ENCODE measurements at regions of chr1 and their contacts with region 1.

Region 1: GRCh38 chr1:204989266-204990058 is 53.5 kb upstream of the CNTN2 start:
- DNase-seq: peak; percentile 70 to 90
- H3K4me3 ChIP-seq: no peak overlapping the region
- H3K27ac ChIP-seq: no peak overlapping the region
- H3K4me1 ChIP-seq: peaks cover 10 to 27% (median 19%) of the 10 kb centered on the region in 4 experiments
- H3K27me3 ChIP-seq: no peaks in the 10 kb centered on the region; a peak in 1 of 7 replicates
- CTCF ChIP-seq: peak; percentile 98 to 100 (median 98)
- EP300 ChIP-seq: no peak
- POLR2A ChIP-seq: no peak
- RAD21 ChIP-seq: peak; percentile 100

Region 2: DNA sequence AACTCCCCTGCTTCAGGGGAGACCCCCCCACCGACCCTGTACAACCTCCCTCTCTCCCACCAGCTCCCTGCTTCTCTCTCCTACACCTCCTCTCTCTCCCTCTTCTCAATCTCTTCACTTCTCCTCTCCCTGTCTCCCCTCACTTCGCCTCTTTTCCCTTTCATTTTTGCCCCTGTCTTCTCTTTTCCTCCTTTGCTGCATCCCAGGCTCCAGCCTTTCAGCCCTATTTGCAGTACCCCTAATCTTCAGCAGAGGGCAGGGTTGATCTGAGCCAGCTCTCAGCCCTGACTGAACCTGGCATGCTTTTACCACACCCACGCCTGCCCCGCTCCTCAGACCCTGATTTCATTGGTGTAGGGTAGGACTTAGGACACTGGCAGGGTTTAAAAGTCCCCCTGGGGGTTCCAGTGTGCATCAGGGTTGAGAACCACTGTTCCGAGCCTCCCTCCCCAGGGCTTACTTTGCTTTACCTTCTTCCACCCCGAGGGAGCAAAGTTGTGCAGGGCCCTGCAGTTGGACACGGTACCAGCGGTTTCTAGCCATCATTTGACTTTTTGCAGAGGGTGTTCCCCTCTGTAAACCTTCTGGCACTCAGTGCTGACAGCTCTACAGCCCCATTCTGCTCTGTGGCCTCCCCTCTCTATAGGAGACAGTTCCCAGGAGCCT is 13.8 kb before region 1 on chr1:
- CTCF ChIA-PET with region 1: interaction called, 99 read pairs
- POLR2A ChIA-PET with region 1: no interaction called
- DNase-seq: peak; percentile 23 to 88
- H3K4me3 ChIP-seq: no peak overlapping the region
- H3K27ac ChIP-seq: no peak overlapping the region
- H3K4me1 ChIP-seq: no peaks in the 10 kb centered on the region
- H3K27me3 ChIP-seq: no peaks in the 10 kb centered on the region
- CTCF ChIP-seq: peak; percentile 77 to 82 (median 80)
- EP300 ChIP-seq: no peak
- POLR2A ChIP-seq: no peak
- RAD21 ChIP-seq: peak; percentile 84 to 86

Region 3: GRCh38 chr1:205003393-205004131 is 14.1 kb after region 1 on chr1:
- CTCF ChIA-PET with region 1: interaction called, 76 read pairs
- POLR2A ChIA-PET with region 1: interaction called, 16 read pairs
- DNase-seq: no peak
- H3K4me3 ChIP-seq: no peak overlapping the region
- H3K27ac ChIP-seq: no peak overlapping the region
- H3K4me1 ChIP-seq: peaks cover 0 to 16% (median 6%) of the 10 kb centered on the region in 4 experiments; a peak in 4 of 7 replicates
- H3K27me3 ChIP-seq: no peaks in the 10 kb centered on the region; a peak in 1 of 7 replicates
- CTCF ChIP-seq: no peak
- EP300 ChIP-seq: no peak
- POLR2A ChIP-seq: no peak
- RAD21 ChIP-seq: no peak

Region 4: GRCh38 chr1:205013683-205014367 is 24.4 kb after region 1 on chr1:
- CTCF ChIA-PET with region 1: interaction called, 531 read pairs
- POLR2A ChIA-PET with region 1: no interaction called
- DNase-seq: no peak
- H3K4me3 ChIP-seq: no peak overlapping the region
- H3K27ac ChIP-seq: no peak overlapping the region
- H3K4me1 ChIP-seq: peaks cover 0 to 21% (median 7%) of the 10 kb centered on the region in 4 experiments; a peak in 5 of 7 replicates
- H3K27me3 ChIP-seq: no peaks in the 10 kb centered on the region
- CTCF ChIP-seq: no peak
- EP300 ChIP-seq: no peak
- POLR2A ChIP-seq: no peak
- RAD21 ChIP-seq: no peak

Region 5: GRCh38 chr1:205042911-205043806 is 53.7 kb after region 1 on chr1 and contains the start of gene CNTN2:
- CTCF ChIA-PET with region 1: interaction called, 1,336 read pairs
- POLR2A ChIA-PET with region 1: interaction called, 3 read pairs
- DNase-seq: peak in 1 of 2 experiments; percentile 75
- H3K4me3 ChIP-seq: peak within 1 kb of the TSS; percentile 1 to 56 (median 34); a peak in 5 of 8 replicates
- H3K27ac ChIP-seq: no peak within 1 kb of the TSS
- H3K4me1 ChIP-seq: peaks cover 13 to 27% (median 16%) of the 10 kb centered on the region in 4 experiments
- H3K27me3 ChIP-seq: peaks cover 0 to 32% (median 18%) of the 10 kb centered on the region in 4 experiments; a peak in 5 of 7 replicates
- CTCF ChIP-seq: no peak
- EP300 ChIP-seq: no peak
- POLR2A ChIP-seq: no peak
- RAD21 ChIP-seq: no peak
- total RNA-seq, gene CNTN2: 3.9 TPM in 2 replicates

Region 6: DNA sequence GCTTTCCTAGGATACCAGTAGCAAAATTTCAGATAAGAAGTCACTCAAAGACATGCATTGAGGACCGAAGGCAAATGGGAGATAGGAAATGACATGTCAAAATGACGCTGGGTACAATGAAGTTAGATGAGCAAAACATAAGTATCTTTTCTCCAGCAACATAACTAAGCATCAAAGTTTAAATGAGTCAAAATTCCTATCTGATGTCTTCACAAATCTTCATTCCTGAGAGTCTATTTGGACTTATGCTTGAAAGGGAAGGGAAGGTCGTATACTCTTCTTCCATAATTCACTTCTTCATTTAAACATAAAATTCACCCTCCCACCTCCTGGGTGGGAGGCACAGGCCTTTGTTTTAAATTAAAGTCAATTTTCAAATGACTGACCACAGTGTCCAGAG is 98.9 kb after region 1 on chr1:
- CTCF ChIA-PET with region 1: interaction called, 1,336 read pairs
- POLR2A ChIA-PET with region 1: no interaction called
- DNase-seq: no peak
- H3K4me3 ChIP-seq: no peak overlapping the region
- H3K27ac ChIP-seq: no peak overlapping the region
- H3K4me1 ChIP-seq: no peaks in the 10 kb centered on the region
- H3K27me3 ChIP-seq: no peaks in the 10 kb centered on the region
- CTCF ChIP-seq: no peak
- EP300 ChIP-seq: no peak
- POLR2A ChIP-seq: no peak
- RAD21 ChIP-seq: no peak

Region 7: GRCh38 chr1:205141236-205142101 is 152.0 kb after region 1 on chr1:
- CTCF ChIA-PET with region 1: interaction called, 13 read pairs
- POLR2A ChIA-PET with region 1: no interaction called
- DNase-seq: peak; percentile 57 to 87
- H3K4me3 ChIP-seq: no peak overlapping the region
- H3K27ac ChIP-seq: no peak overlapping the region
- H3K4me1 ChIP-seq: peaks cover 0 to 3% (median 1%) of the 10 kb centered on the region in 4 experiments; a peak in 2 of 7 replicates
- H3K27me3 ChIP-seq: no peaks in the 10 kb centered on the region
- CTCF ChIP-seq: peak; percentile 17 to 83 (median 79)
- EP300 ChIP-seq: no peak
- POLR2A ChIP-seq: no peak
- RAD21 ChIP-seq: peak; percentile 61 to 71

Region 8: GRCh38 chr1:205214756-205215155 is 225.3 kb after region 1 on chr1:
- CTCF ChIA-PET with region 1: no interaction called
- POLR2A ChIA-PET with region 1: no interaction called
- DNase-seq: no peak
- H3K4me3 ChIP-seq: no peak overlapping the region
- H3K27ac ChIP-seq: no peak overlapping the region
- H3K4me1 ChIP-seq: peaks cover 0 to 5% (median 3%) of the 10 kb centered on the region in 4 experiments; a peak in 3 of 7 replicates
- H3K27me3 ChIP-seq: no peaks in the 10 kb centered on the region
- CTCF ChIP-seq: no peak
- EP300 ChIP-seq: no peak
- POLR2A ChIP-seq: no peak
- RAD21 ChIP-seq: no peak